Caco-2 (cell line): ENCODE measurements at regions of chr15 and their contacts with region 1.

Region 1: GRCh38 chr15:48855501-48856440 is 22.2 kb upstream of the EID1 start:
- DNase-seq: peak in 1 of 2 experiments; percentile 43
- H3K4me3 ChIP-seq: no peak overlapping the region
- H3K4me3 Mint-ChIP-seq: peak overlapping the region; percentile 2
- H3K27ac Mint-ChIP-seq: no peak overlapping the region
- H3K4me1 ChIP-seq: peaks cover 10% of the 10 kb centered on the region
- H3K4me1 Mint-ChIP-seq: peaks cover 14% of the 10 kb centered on the region
- H3K27me3 ChIP-seq: no peaks in the 10 kb centered on the region
- H3K27me3 Mint-ChIP-seq: peaks cover 8% of the 10 kb centered on the region
- CTCF ChIP-seq: peak; percentile 50 to 61

Region 2: DNA sequence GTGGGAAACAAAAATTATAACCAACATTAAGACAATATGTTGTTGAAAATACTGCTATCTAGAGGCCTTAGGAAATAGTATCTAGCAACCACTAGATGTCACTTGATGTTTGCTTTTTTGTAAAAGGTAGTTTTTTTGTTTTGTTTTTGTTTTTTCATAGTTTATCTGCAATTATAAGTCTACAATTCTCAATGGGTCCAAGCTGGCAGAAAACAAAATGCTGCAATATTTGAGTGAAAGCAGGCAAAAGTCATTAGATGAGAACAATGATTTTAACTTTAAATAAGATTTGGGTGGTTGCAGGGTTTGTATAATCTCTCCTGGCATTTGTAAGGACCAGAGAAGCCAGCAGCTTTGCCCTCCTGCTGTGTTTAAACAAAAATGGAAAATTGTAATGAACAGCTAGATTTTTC is 497.5 kb before region 1 on chr15:
- CTCF ChIA-PET with region 1: no interaction called
- POLR2A ChIA-PET with region 1: no interaction called
- intact Hi-C with region 1: loop called (anchors 1 kb)
- DNase-seq: no peak
- H3K4me3 ChIP-seq: no peak overlapping the region
- H3K4me3 Mint-ChIP-seq: no peak overlapping the region
- H3K27ac Mint-ChIP-seq: no peak overlapping the region
- H3K4me1 ChIP-seq: no peaks in the 10 kb centered on the region
- H3K4me1 Mint-ChIP-seq: peaks cover 13% of the 10 kb centered on the region
- H3K27me3 ChIP-seq: no peaks in the 10 kb centered on the region
- H3K27me3 Mint-ChIP-seq: no peaks in the 10 kb centered on the region
- CTCF ChIP-seq: peak; percentile 45 to 59

Region 3: GRCh38 chr15:48717458-48717857 is 138.3 kb before region 1 on chr15:
- CTCF ChIA-PET with region 1: no interaction called
- POLR2A ChIA-PET with region 1: no interaction called
- intact Hi-C with region 1: loop called (anchors 1 kb)
- DNase-seq: no peak
- H3K4me3 ChIP-seq: no peak overlapping the region
- H3K4me3 Mint-ChIP-seq: no peak overlapping the region
- H3K27ac Mint-ChIP-seq: no peak overlapping the region
- H3K4me1 ChIP-seq: peaks cover 7% of the 10 kb centered on the region; the same call in 1 of the 2 replicates
- H3K4me1 Mint-ChIP-seq: peaks cover 9% of the 10 kb centered on the region
- H3K27me3 ChIP-seq: no peaks in the 10 kb centered on the region
- H3K27me3 Mint-ChIP-seq: peaks cover 3% of the 10 kb centered on the region
- CTCF ChIP-seq: no peak

Region 4: GRCh38 chr15:48810414-48811317 is 45.1 kb before region 1 on chr15 and contains the start of gene CEP152:
- CTCF ChIA-PET with region 1: interaction called, 3 read pairs
- POLR2A ChIA-PET with region 1: no interaction called
- intact Hi-C with region 1: loop called (anchors 5 kb)
- DNase-seq: peak; percentile 98 to 99
- H3K4me3 ChIP-seq: peak within 1 kb of the TSS; percentile 69
- H3K4me3 Mint-ChIP-seq: peak within 1 kb of the TSS; percentile 80
- H3K27ac Mint-ChIP-seq: peak within 1 kb of the TSS; percentile 96
- H3K4me1 ChIP-seq: 0 out of 2 replicates have a peak, but pooled peaks cover 6% of the 10 kb centered on the region
- H3K4me1 Mint-ChIP-seq: peaks cover 19% of the 10 kb centered on the region
- H3K27me3 ChIP-seq: no peaks in the 10 kb centered on the region
- H3K27me3 Mint-ChIP-seq: peaks cover 3% of the 10 kb centered on the region
- CTCF ChIP-seq: no peak
- total RNA-seq, gene CEP152: 14.2 and 16.5 TPM in 2 replicates

Region 5: DNA sequence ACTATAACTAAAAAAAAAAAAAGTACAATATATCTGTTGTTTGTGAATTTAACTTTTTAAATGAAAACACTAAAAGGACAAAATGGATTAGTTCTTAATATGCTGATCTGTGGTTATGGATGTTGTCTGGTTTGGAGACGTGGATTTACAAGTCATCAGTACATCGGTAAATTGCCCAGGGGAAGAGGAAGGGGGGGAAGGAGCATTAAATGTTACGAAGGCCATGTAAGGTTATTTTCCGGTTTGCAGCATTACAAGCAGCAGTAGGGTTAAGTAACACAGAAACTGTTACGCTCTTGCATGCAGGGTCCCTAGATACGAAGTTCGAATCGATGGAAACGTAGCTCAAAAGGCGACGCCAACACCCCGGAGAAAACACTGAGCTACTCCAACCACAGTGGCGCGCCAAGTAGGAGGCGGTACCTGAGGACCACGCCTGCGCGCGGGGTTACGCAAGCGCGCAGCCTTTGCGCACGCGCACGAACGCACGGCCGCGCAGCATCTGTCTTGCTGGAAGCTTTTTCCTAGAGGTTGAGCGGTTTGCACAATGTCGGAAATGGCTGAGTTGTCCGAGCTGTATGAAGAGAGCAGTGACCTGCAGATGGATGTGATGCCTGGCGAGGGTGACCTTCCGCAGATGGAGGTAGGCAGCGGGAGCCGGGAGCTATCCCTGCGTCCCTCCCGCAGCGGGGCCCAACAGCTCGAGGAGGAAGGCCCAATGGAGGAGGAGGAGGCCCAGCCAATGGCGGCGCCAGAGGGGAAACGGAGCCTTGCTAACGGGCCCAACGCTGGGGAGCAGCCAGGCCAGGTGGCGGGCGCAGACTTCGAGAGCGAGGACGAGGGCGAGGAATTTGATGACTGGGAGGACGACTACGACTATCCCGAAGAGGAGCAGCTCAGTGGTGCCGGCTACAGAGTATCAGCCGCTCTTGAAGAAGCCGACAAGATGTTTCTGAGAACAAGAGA is 22.1 kb after region 1 on chr15 and contains the start of gene EID1:
- CTCF ChIA-PET with region 1: no interaction called
- POLR2A ChIA-PET with region 1: no interaction called
- intact Hi-C with region 1: no loop called
- DNase-seq: peak; percentile 89 to 91
- H3K4me3 ChIP-seq: peak within 1 kb of the TSS; percentile 73
- H3K4me3 Mint-ChIP-seq: peak within 1 kb of the TSS; percentile 99
- H3K27ac Mint-ChIP-seq: peak within 1 kb of the TSS; percentile 95
- H3K4me1 ChIP-seq: peaks cover 12% of the 10 kb centered on the region
- H3K4me1 Mint-ChIP-seq: peaks cover 17% of the 10 kb centered on the region
- H3K27me3 ChIP-seq: no peaks in the 10 kb centered on the region
- H3K27me3 Mint-ChIP-seq: peaks cover 8% of the 10 kb centered on the region
- CTCF ChIP-seq: no peak
- total RNA-seq, gene EID1: 60.6 and 63.6 TPM in 2 replicates

Region 6: DNA sequence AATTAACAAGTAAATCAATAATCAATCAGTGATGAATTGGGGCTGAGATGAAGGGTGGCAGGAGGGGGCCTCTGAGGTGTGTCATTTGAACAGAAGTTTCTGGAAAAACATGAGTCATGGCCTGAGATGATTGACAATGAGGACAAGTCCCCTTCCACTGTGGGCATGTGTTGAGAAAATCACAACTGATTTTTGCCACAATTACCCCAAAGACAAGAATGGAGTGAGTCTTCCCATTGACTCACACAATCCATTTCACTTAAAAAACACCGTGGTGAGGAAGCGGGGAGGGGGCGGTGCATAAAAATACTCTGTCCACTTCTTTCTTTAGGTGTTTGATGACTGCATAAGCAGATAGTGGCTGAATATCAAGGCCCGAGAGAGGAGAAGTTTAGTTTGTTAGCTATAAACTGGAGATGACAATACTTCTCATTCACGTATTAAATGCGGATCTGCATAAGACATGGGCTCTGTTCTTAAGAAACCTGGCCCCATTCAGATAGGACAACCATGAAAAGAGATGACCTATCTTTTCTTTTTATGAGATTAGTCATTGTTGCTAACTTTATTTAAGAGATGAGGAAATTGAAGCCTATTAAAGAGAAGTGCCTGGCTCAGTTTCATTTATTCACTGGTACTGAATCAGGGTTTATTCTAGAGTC is 73.2 kb after region 1 on chr15:
- CTCF ChIA-PET with region 1: no interaction called
- POLR2A ChIA-PET with region 1: no interaction called
- intact Hi-C with region 1: no loop called
- DNase-seq: no peak
- H3K4me3 ChIP-seq: no peak overlapping the region
- H3K4me3 Mint-ChIP-seq: no peak overlapping the region
- H3K27ac Mint-ChIP-seq: no peak overlapping the region
- H3K4me1 ChIP-seq: no peaks in the 10 kb centered on the region
- H3K4me1 Mint-ChIP-seq: no peaks in the 10 kb centered on the region
- H3K27me3 ChIP-seq: no peaks in the 10 kb centered on the region
- H3K27me3 Mint-ChIP-seq: peaks cover 21% of the 10 kb centered on the region
- CTCF ChIP-seq: no peak